ENCODE measurements at regions of chr13 and their contacts with region 1.

Region 1: GRCh38 chr13:46463719-46464118 is 76.7 kb upstream of the RUBCNL start:
- DNase-seq: no peak
- ATAC-seq: no peak
- H3K4me3 Mint-ChIP-seq: no peak overlapping the region
- H3K27ac Mint-ChIP-seq: no peak overlapping the region
- H3K4me1 Mint-ChIP-seq: no peaks in the 10 kb centered on the region
- H3K27me3 Mint-ChIP-seq: peaks cover 3% of the 10 kb centered on the region
- CTCF ChIP-seq: no peak

Region 2: DNA sequence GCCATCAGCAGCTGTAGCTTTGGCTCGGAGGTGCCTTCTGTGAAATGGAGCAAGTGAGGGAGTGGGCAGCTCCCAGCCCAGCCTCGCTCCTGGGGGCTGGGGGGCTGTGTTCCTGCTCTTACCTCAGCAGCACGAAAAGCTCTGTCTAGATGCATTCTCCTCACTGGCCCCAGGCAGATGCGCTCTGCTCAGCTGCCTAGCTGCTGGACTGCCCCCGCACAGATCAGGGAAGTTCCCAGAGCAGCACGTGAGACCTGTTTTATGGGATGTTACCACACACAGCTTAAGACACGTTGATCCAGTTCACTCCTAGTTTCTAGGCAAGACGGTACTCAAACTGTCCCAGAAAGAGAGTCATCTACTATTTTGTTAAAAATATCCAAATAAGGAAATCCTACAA is 295.4 kb before region 1 on chr13:
- CTCF ChIA-PET with region 1: no interaction called
- POLR2A ChIA-PET with region 1: no interaction called
- intact Hi-C with region 1: no loop called
- DNase-seq: peak; percentile 74
- ATAC-seq: peak; percentile 38
- H3K4me3 Mint-ChIP-seq: peak overlapping the region; percentile 75
- H3K27ac Mint-ChIP-seq: peak overlapping the region; percentile 88
- H3K4me1 Mint-ChIP-seq: peaks cover 88% of the 10 kb centered on the region
- H3K27me3 Mint-ChIP-seq: no peaks in the 10 kb centered on the region
- CTCF ChIP-seq: no peak

Region 3: GRCh38 chr13:46476174-46476573 is 12.5 kb after region 1 on chr13:
- CTCF ChIA-PET with region 1: no interaction called
- POLR2A ChIA-PET with region 1: no interaction called
- intact Hi-C with region 1: loop called (anchors 2 kb)
- DNase-seq: no peak
- ATAC-seq: no peak
- H3K4me3 Mint-ChIP-seq: no peak overlapping the region
- H3K27ac Mint-ChIP-seq: no peak overlapping the region
- H3K4me1 Mint-ChIP-seq: no peaks in the 10 kb centered on the region
- H3K27me3 Mint-ChIP-seq: no peaks in the 10 kb centered on the region
- CTCF ChIP-seq: no peak

Measured in activated CD8-positive, alpha-beta T cell treated with anti-CD3 and anti-CD28 coated beads for 36 hours (primary cell).